Endothelial cell of umbilical vein (primary cell): ENCODE measurements at regions of chr7 and their contacts with region 1.

Region 1: GRCh38 chr7:47945261-47946001 is 2.8 kb downstream of the PKD1L1 start:
- DNase-seq: peak; percentile 83
- H3K4me3 ChIP-seq: no peak overlapping the region
- H3K27ac ChIP-seq: peak overlapping the region; percentile 60
- H3K4me1 ChIP-seq: peaks cover 86% of the 10 kb centered on the region
- H3K27me3 ChIP-seq: no peaks in the 10 kb centered on the region
- CTCF ChIP-seq: peak; percentile 61 to 65
- POLR2A ChIP-seq: no peak

Region 2: GRCh38 chr7:47482013-47482875 is 463.2 kb before region 1 on chr7:
- CTCF ChIA-PET with region 1: interaction called, 3 read pairs
- POLR2A ChIA-PET with region 1: no interaction called
- dilution Hi-C with region 1: no loop called
- intact Hi-C with region 1: loop called (anchors 1 kb)
- DNase-seq: peak; percentile 83
- H3K4me3 ChIP-seq: no peak overlapping the region
- H3K27ac ChIP-seq: peak overlapping the region; percentile 89
- H3K4me1 ChIP-seq: peaks cover 16% of the 10 kb centered on the region
- H3K27me3 ChIP-seq: no peaks in the 10 kb centered on the region
- CTCF ChIP-seq: no peak
- POLR2A ChIP-seq: peak; percentile 49

Region 3: DNA sequence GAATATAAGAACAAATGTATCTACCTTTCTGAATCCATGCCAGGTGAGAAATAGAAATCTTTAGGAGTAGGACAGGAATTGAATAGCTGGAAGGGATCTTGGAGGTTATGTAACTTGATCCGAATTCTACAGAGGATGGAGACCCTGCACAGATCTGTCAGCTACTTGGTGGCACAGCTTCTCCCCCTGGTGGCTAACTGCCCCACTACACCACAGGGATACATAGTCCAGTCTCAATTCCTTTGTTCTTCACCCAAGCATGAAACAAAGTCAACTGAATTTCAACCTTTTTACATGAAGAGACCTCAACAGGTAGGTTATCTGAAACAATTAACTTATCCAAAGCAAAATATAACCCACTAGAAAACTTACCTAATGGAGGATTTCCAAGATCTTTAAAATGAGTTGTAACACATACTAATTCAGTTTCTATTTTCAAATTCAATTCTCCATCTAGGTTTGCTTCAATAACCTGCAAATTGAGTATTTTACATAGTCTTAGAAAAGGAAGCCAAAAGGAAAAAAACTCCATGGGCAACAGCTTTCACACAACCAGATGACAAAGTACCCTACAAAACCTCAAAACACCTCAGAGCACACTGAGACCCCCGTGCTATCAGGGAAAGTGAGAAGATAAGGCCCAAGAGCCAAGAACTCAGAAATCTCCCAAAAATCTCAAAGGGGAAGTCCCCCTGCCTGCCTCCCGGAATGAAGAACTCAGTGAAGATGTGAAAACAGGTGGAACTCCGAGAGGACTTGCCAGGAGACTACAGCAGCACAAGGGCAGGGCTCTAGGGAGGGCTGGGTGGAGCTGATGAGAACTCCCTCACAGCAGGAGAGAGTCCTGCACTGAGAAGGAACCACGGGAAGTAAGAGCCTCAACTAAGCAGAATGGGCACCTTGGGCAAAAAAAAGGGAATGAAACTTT is 23.7 kb after region 1 on chr7:
- CTCF ChIA-PET with region 1: interaction called, 371 read pairs
- POLR2A ChIA-PET with region 1: interaction called, 8 read pairs
- dilution Hi-C with region 1: no loop called
- intact Hi-C with region 1: loop called (anchors 1 kb)
- DNase-seq: peak; percentile 90
- H3K4me3 ChIP-seq: no peak overlapping the region
- H3K27ac ChIP-seq: peak overlapping the region; percentile 73
- H3K4me1 ChIP-seq: peaks cover 32% of the 10 kb centered on the region
- H3K27me3 ChIP-seq: no peaks in the 10 kb centered on the region
- CTCF ChIP-seq: peak; percentile 91 to 95
- POLR2A ChIP-seq: no peak

Region 4: DNA sequence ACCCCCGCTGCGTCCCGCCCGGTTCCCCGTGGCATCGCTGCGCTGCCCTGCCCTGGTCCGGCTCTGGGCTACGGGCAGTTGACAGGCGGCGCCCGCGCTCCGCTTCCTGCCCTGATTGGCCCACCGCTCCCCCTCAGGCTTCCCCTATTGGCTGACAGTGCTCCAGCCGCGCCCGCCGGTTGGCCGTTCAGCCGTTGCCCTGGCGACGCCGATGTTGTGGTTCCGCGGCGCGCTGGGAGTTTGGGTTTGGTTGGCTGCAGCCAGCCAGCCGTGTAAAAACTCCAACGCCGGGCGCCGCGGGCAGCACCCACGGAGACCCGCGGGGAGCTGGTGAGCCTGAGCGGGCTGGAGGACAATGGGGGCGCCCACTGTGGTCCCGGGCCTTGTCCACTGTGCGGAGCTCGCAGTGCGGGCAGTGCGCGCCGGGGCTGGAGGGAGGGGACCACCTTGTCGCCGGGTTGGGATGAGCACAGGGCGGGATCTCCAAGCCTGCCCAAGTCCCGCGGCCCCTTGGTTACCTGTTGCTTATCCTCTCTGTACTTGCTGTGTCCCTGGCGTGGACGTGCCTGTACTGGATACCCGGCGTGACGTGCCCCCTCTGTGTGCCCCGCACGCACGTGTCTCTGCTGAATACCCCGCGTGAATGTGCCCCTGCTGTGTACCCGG is 90.0 kb after region 1 on chr7 and contains the start of gene C7orf57:
- CTCF ChIA-PET with region 1: no interaction called
- POLR2A ChIA-PET with region 1: no interaction called
- dilution Hi-C with region 1: no loop called
- intact Hi-C with region 1: loop called (anchors 5 kb)
- DNase-seq: peak; percentile 85
- H3K4me3 ChIP-seq: peak within 1 kb of the TSS; percentile 19 to 51 (median 43)
- H3K27ac ChIP-seq: no peak within 1 kb of the TSS
- H3K4me1 ChIP-seq: peaks cover 6% of the 10 kb centered on the region
- H3K27me3 ChIP-seq: peaks cover 16 to 26% of the 10 kb centered on the region in 2 experiments
- CTCF ChIP-seq: peak in 1 of 2 donors; percentile 37
- POLR2A ChIP-seq: no peak
- total RNA-seq, gene C7orf57: not detected in 2 replicates

Region 5: DNA sequence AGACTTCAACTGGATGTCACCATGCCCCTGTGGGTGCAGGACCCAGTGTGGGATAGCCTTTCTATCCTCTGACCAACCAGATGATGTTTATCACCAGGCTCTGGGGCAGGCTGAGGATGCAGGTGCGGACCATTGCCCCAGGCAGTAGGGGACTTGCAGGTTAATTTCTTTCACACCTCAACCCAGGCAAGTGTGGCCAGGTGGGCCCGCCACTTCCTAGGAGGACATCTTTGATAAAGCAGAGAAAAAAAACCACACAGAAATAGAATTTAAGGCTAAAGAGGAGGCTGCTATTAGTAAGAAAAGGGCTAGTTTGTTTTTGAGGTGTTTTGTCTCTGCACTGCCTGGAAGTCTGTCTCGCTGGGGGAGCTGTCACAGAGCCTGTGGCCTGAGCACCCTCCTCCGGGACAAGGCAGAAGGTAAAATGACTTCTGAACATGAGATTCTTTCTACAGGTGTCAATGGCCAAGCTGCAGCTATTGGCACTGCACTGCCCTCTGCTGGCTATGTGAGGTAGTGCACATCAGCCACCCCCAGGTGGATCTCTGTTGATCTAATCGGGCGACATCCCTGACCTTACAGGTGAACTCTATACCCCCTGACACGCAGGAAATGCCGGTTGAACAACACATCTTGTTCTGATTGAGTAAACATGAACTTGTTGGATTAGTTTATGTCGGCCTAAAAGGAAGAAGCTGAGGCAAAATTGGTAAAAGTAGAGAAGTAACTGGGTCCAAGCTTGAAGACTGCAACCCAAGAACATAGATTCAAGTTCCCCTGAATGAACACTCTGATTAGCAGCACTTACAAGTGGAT is 164.6 kb after region 1 on chr7:
- CTCF ChIA-PET with region 1: interaction called, 149 read pairs
- POLR2A ChIA-PET with region 1: no interaction called
- dilution Hi-C with region 1: no loop called
- intact Hi-C with region 1: loop called (anchors 1 kb)
- DNase-seq: peak; percentile 69
- H3K4me3 ChIP-seq: no peak overlapping the region
- H3K27ac ChIP-seq: no peak overlapping the region
- H3K4me1 ChIP-seq: no peaks in the 10 kb centered on the region
- H3K27me3 ChIP-seq: no peaks in the 10 kb centered on the region
- CTCF ChIP-seq: peak; percentile 97
- POLR2A ChIP-seq: no peak

Region 6: GRCh38 chr7:48441848-48442492 is 496.5 kb after region 1 on chr7:
- CTCF ChIA-PET with region 1: no interaction called
- POLR2A ChIA-PET with region 1: no interaction called
- dilution Hi-C with region 1: no loop called
- intact Hi-C with region 1: no loop called
- DNase-seq: no peak
- H3K4me3 ChIP-seq: no peak overlapping the region
- H3K27ac ChIP-seq: no peak overlapping the region
- H3K4me1 ChIP-seq: no peaks in the 10 kb centered on the region
- H3K27me3 ChIP-seq: no peaks in the 10 kb centered on the region
- CTCF ChIP-seq: no peak
- POLR2A ChIP-seq: no peak